Vagina (tissue), 2 donors: ENCODE measurements at regions of chr11 and their contacts with region 1.

Region 1: GRCh38 chr11:84012171-84012826 is 726.1 kb upstream of the CCDC90B start:
- DNase-seq: no peak
- H3K4me3 ChIP-seq: no peak overlapping the region
- H3K27ac ChIP-seq: no peak overlapping the region
- H3K4me1 ChIP-seq: no peaks in the 10 kb centered on the region
- H3K27me3 ChIP-seq: no peaks in the 10 kb centered on the region
- CTCF ChIP-seq: no peak
- POLR2A ChIP-seq: no peak

Region 2: DNA sequence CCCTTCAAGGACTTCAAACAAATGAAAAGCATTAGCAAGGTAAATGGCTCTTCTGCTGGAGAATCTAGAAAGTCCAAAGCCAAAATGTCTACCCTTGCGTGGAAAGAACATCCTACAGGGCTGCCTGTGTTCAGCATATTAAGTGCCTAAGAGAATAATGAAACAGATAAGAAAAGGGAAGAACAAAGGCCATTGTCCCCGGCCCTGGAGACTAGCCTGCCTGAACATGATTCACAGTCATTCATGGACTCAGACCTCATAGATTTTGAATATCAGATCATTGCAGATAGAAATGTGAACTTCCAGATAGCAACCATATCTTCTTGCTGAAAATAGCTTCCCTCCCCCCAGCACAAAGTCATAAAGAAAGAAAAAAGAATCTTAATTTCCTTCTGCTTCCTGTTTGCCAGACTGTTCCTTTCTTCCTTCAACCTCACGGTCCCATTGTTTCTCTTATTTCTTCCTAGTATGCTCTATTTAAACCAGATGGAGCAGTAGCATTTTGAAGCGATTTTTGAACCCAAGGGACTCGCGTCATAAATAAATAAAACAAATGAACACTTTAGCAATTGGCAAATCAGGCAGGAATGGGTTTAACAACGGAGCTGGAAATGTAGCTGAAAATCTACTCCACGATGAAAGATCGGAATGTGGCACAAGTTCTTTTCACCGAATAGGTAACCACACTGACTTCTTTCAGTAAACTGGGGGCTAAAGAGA is 317.9 kb before region 1 on chr11:
- intact Hi-C with region 1: no loop called
- DNase-seq: no peak
- H3K4me3 ChIP-seq: no peak overlapping the region
- H3K27ac ChIP-seq: no peak overlapping the region
- H3K4me1 ChIP-seq: peaks cover 27% of the 10 kb centered on the region
- H3K27me3 ChIP-seq: no peaks in the 10 kb centered on the region
- CTCF ChIP-seq: no peak
- POLR2A ChIP-seq: no peak

Region 3: DNA sequence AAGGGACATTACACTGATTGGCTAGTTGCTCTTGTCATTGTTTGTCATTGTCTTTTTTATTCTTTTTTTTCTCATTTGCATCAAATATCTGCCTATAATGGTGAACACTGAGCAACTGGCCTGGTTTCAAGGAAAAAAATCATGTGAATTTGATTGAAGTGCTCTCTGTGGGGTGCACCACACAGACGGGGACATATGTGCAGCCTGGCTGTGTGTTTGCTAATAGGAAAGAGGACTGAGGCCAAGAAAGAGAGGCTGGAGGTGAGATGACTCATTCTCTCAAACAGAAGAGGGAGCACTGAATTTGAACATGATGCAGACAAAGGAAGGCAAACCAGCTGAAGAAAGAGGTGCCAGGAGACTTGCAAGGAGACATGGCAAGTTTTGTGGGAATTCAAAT is 41.2 kb before region 1 on chr11:
- intact Hi-C with region 1: loop called (anchors 5 kb)
- DNase-seq: no peak
- H3K4me3 ChIP-seq: no peak overlapping the region
- H3K27ac ChIP-seq: no peak overlapping the region
- H3K4me1 ChIP-seq: no peaks in the 10 kb centered on the region
- H3K27me3 ChIP-seq: no peaks in the 10 kb centered on the region
- CTCF ChIP-seq: no peak
- POLR2A ChIP-seq: no peak

Region 4: DNA sequence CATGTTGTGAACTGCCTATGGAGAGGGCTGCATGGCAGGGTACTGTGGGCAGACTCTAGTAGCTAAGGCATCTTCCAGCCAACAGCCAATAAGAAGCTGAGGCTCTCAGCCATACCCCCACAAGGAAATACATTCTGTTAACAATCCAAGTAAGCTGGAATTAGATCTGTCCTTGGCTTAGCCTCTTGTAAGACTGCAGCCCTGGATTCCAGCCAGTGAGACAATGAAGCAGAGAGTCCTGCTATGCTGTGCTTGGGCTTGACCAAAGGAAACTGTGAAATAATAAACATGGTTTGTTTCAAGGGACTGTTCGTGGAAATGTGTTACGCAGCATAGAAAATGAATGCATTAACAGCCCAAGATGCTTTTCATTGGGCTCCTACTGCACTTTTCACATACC is 371.3 kb after region 1 on chr11:
- intact Hi-C with region 1: no loop called
- DNase-seq: no peak
- H3K4me3 ChIP-seq: no peak overlapping the region
- H3K27ac ChIP-seq: no peak overlapping the region
- H3K4me1 ChIP-seq: no peaks in the 10 kb centered on the region
- H3K27me3 ChIP-seq: no peaks in the 10 kb centered on the region
- CTCF ChIP-seq: no peak
- POLR2A ChIP-seq: no peak